GM12878 (cell line): ENCODE measurements at regions of chr6 and their contacts with region 1.

Region 1: GRCh38 chr6:100472674-100473073 is 8.0 kb upstream of the SIM1 start:
- DNase-seq: peak; percentile 42
- ATAC-seq: peak; percentile 86
- H3K4me3 ChIP-seq: no peak overlapping the region
- H3K27ac ChIP-seq: no peak overlapping the region
- H3K4me1 ChIP-seq: peaks cover 16% of the 10 kb centered on the region
- H3K27me3 ChIP-seq: peaks cover 2 to 9% of the 10 kb centered on the region in 2 experiments; a peak in 3 of 4 replicates
- CTCF ChIP-seq: no peak
- EP300 ChIP-seq: peak in 1 of 2 experiments; percentile 77; a peak in 2 of 4 replicates
- POLR2A ChIP-seq: no peak
- RAD21 ChIP-seq: no peak

Region 2: GRCh38 chr6:100126790-100127484 is 345.7 kb before region 1 on chr6:
- CTCF ChIA-PET with region 1: interaction called, 5 read pairs
- POLR2A ChIA-PET with region 1: no interaction called
- RAD21 ChIA-PET with region 1: interaction called, 3 read pairs
- SMC1A ChIA-PET with region 1: interaction called, 13 read pairs
- in situ Hi-C with region 1: no loop called
- intact Hi-C with region 1: no loop called
- DNase-seq: no peak
- ATAC-seq: peak; percentile 94
- H3K4me3 ChIP-seq: no peak overlapping the region
- H3K27ac ChIP-seq: no peak overlapping the region
- H3K4me1 ChIP-seq: no peaks in the 10 kb centered on the region
- H3K27me3 ChIP-seq: no peaks in the 10 kb centered on the region
- CTCF ChIP-seq: no peak
- EP300 ChIP-seq: peak; percentile 46 to 73; a peak in 3 of 4 replicates
- POLR2A ChIP-seq: no peak
- RAD21 ChIP-seq: no peak